ENCODE measurements at regions of chr2 and their contacts with region 1.

Region 1: GRCh38 chr2:32039447-32040219 is at the start of gene DPY30:
- DNase-seq: peak; percentile 82 to 94 (median 88)
- ATAC-seq: peak; percentile 93 to 95 (median 94)
- H3K4me3 ChIP-seq: peak within 1 kb of the TSS; percentile 79 to 85
- H3K4me3 Mint-ChIP-seq: peak within 1 kb of the TSS; percentile 87 to 95 (median 88)
- H3K27ac ChIP-seq: peak within 1 kb of the TSS; percentile 73
- H3K27ac Mint-ChIP-seq: peak within 1 kb of the TSS; percentile 97 to 98
- H3K4me1 ChIP-seq: peaks cover 4 to 15% of the 10 kb centered on the region in 2 experiments
- H3K4me1 Mint-ChIP-seq: peaks cover 14 to 25% (median 22%) of the 10 kb centered on the region in 3 donors
- H3K27me3 ChIP-seq: no peaks in the 10 kb centered on the region
- H3K27me3 Mint-ChIP-seq: no peaks in the 10 kb centered on the region
- total RNA-seq, gene DPY30: 30.3 to 54.1 (median 45.6) TPM

Region 2: GRCh38 chr2:31980674-31981356 is 58.8 kb before region 1 on chr2:
- CTCF ChIA-PET with region 1: no interaction called
- POLR2A ChIA-PET with region 1: interaction called in 1 of 2 experiments, 16 read pairs
- DNase-seq: peak in 9 of 35 experiments; percentile 2 to 36 (median 8)
- ATAC-seq: peak; percentile 78 to 91 (median 84)
- H3K4me3 ChIP-seq: no peak overlapping the region
- H3K4me3 Mint-ChIP-seq: peak overlapping the region in 1 of 3 donors; percentile 1
- H3K27ac ChIP-seq: peak overlapping the region; percentile 1
- H3K27ac Mint-ChIP-seq: peak overlapping the region; percentile 50 to 66
- H3K4me1 ChIP-seq: peaks cover 7 to 9% of the 10 kb centered on the region in 2 experiments
- H3K4me1 Mint-ChIP-seq: peaks cover 38 to 44% (median 42%) of the 10 kb centered on the region in 3 donors
- H3K27me3 ChIP-seq: no peaks in the 10 kb centered on the region
- H3K27me3 Mint-ChIP-seq: no peaks in the 10 kb centered on the region

Region 3: DNA sequence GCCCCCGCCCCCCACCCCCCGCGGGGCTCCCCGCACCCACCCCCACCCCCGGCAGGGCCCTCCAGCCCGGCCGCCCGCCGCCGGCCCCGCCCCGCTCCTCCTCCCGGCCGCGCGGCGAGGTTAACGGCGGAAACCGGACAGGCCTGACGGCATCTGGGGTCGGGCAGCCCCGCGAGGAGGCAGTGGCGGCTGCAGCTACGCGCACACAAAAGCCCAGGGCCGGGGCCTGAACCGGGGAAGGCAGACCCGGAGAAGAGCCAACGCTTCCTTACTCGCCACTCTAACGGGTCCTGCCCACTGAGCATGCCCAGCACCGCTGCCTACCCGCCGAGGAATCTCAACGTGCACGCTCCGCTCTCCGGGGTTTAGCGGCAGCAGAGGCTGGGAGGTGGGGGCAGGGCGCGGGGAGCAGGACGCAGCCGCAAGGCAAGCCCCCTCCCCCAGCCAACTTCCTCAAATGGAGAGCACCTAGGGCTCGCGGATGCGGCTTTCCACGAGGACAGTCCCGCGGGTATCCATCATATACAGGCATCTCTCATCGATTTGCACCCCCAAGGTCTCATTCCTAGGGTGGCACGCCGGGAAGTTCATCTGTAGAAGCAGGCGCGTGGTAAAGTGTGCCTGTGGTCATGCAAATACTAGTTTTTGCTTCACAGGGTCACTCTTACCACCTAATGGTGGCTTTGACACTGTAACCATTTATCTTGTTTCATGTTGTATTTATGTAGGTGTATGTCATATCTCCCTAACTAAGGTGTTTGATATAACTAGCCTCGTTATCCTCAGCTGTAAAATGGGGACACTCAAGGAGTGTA is 28.8 kb before region 1 on chr2 and contains the start of gene MEMO1:
- CTCF ChIA-PET with region 1: interaction called in 1 of 2 experiments, 4 read pairs
- POLR2A ChIA-PET with region 1: interaction called in 1 of 2 experiments, 10 read pairs
- DNase-seq: peak; percentile 83 to 95 (median 91)
- ATAC-seq: peak; percentile 72 to 78 (median 76)
- H3K4me3 ChIP-seq: peak within 1 kb of the TSS; percentile 66 to 79
- H3K4me3 Mint-ChIP-seq: peak within 1 kb of the TSS; percentile 83 to 90 (median 88)
- H3K27ac ChIP-seq: peak within 1 kb of the TSS; percentile 74
- H3K27ac Mint-ChIP-seq: peak within 1 kb of the TSS; percentile 94 to 95
- H3K4me1 ChIP-seq: peaks cover 8 to 27% of the 10 kb centered on the region in 2 experiments
- H3K4me1 Mint-ChIP-seq: peaks cover 39 to 49% (median 42%) of the 10 kb centered on the region in 3 donors
- H3K27me3 ChIP-seq: no peaks in the 10 kb centered on the region
- H3K27me3 Mint-ChIP-seq: no peaks in the 10 kb centered on the region
- total RNA-seq, gene MEMO1: 35.0 to 46.3 (median 41.5) TPM

Region 4: DNA sequence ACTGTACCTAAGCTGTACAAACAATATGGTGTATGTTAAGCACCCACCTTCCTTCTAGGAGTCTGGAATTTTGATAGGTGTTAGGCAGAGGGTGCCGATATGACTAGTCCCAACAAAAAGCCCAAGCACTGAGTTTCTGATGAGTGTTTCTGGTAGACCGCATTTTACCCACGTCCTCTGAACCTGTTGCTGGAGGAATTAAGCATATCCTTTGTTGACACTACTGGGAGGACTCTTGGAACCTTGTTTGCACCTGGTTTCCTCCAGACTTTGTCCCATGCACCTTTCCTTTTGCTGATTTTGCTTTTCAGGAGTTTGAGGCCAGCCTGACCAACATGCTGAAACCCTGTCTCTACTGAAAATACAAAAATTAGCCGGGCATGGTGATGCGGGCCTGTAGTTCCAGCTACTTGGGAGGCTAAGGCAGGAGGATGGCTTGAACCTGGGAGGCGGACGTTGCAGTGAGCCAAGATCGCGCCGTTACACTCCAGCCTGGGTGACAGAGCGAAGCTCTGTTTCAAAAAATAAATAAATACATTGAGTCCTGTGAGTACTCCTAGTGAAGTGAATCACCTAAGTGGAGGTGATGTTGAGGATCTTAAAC is 12.3 kb after region 1 on chr2:
- CTCF ChIA-PET with region 1: no interaction called
- POLR2A ChIA-PET with region 1: interaction called in 1 of 2 experiments, 10 read pairs
- DNase-seq: no peak
- ATAC-seq: no peak
- H3K4me3 ChIP-seq: no peak overlapping the region
- H3K4me3 Mint-ChIP-seq: no peak overlapping the region
- H3K27ac ChIP-seq: no peak overlapping the region
- H3K27ac Mint-ChIP-seq: no peak overlapping the region
- H3K4me1 ChIP-seq: no peaks in the 10 kb centered on the region
- H3K4me1 Mint-ChIP-seq: no peaks in the 10 kb centered on the region
- H3K27me3 ChIP-seq: no peaks in the 10 kb centered on the region
- H3K27me3 Mint-ChIP-seq: no peaks in the 10 kb centered on the region

Region 5: DNA sequence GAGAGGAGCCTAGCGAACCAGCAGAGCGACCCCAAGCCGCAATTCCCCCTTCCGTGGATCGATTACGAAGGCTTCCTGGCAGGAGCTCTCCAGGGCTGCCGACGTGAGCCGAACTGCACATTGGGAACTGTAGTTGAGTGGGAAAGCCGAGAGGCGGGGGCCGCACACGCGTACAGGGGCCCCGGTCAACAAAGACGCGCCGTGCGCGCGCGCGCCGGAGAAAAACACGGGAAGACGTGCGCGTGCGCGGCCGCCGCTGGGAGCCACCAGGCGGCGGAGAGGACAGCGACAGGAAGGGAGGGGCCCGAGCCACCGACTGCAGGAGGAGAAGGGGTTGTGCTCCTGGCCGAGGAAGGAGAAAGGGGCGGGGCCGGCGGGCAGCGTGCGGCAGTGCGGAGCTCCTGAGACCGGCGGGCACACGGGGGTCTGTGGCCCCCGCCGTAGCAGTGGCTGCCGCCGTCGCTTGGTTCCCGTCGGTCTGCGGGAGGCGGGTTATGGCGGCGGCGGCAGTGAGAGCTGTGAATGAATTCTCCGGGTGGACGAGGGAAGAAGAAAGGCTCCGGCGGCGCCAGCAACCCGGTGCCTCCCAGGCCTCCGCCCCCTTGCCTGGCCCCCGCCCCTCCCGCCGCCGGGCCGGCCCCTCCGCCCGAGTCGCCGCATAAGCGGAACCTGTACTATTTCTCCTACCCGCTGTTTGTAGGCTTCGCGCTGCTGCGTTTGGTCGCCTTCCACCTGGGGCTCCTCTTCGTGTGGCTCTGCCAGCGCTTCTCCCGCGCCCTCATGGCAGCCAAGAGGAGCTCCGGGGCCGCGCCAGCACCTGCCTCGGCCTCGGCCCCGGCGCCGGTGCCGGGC is 23.9 kb after region 1 on chr2 and contains the start of gene SPAST:
- CTCF ChIA-PET with region 1: interaction called, 3 to 27 read pairs
- POLR2A ChIA-PET with region 1: interaction called, 10 to 20 read pairs
- DNase-seq: peak; percentile 91 to 97 (median 94)
- ATAC-seq: peak; percentile 88 to 92 (median 91)
- H3K4me3 ChIP-seq: peak within 1 kb of the TSS; percentile 83 to 85
- H3K4me3 Mint-ChIP-seq: peak within 1 kb of the TSS; percentile 97 to 99 (median 98)
- H3K27ac ChIP-seq: peak within 1 kb of the TSS; percentile 70
- H3K27ac Mint-ChIP-seq: peak within 1 kb of the TSS; percentile 94 to 98
- H3K4me1 ChIP-seq: peaks cover 16 to 21% of the 10 kb centered on the region in 2 experiments
- H3K4me1 Mint-ChIP-seq: peaks cover 41 to 43% (median 42%) of the 10 kb centered on the region in 3 donors
- H3K27me3 ChIP-seq: no peaks in the 10 kb centered on the region
- H3K27me3 Mint-ChIP-seq: no peaks in the 10 kb centered on the region
- total RNA-seq, gene SPAST: 17.7 to 21.9 (median 19.9) TPM

Region 6: GRCh38 chr2:32135409-32135808 is 95.8 kb after region 1 on chr2:
- CTCF ChIA-PET with region 1: no interaction called
- POLR2A ChIA-PET with region 1: no interaction called
- DNase-seq: peak in 1 of 35 experiments; percentile 25
- ATAC-seq: peak in 3 of 4 experiments; percentile 26 to 43 (median 34)
- H3K4me3 ChIP-seq: no peak overlapping the region
- H3K4me3 Mint-ChIP-seq: no peak overlapping the region
- H3K27ac ChIP-seq: no peak overlapping the region
- H3K27ac Mint-ChIP-seq: no peak overlapping the region
- H3K4me1 ChIP-seq: no peaks in the 10 kb centered on the region
- H3K4me1 Mint-ChIP-seq: no peaks in the 10 kb centered on the region
- H3K27me3 ChIP-seq: no peaks in the 10 kb centered on the region
- H3K27me3 Mint-ChIP-seq: no peaks in the 10 kb centered on the region

Measured in T-cell (primary cell).